Activated naive CD8-positive, alpha-beta T cell treated with anti-CD3 and anti-CD28 coated beads, Interleukin-2, amount 10 ng/mL, durations not matched to agents 7 days and 5 days (primary cell): ENCODE measurements at regions of chr18 and their contacts with region 1.

Region 1: DNA sequence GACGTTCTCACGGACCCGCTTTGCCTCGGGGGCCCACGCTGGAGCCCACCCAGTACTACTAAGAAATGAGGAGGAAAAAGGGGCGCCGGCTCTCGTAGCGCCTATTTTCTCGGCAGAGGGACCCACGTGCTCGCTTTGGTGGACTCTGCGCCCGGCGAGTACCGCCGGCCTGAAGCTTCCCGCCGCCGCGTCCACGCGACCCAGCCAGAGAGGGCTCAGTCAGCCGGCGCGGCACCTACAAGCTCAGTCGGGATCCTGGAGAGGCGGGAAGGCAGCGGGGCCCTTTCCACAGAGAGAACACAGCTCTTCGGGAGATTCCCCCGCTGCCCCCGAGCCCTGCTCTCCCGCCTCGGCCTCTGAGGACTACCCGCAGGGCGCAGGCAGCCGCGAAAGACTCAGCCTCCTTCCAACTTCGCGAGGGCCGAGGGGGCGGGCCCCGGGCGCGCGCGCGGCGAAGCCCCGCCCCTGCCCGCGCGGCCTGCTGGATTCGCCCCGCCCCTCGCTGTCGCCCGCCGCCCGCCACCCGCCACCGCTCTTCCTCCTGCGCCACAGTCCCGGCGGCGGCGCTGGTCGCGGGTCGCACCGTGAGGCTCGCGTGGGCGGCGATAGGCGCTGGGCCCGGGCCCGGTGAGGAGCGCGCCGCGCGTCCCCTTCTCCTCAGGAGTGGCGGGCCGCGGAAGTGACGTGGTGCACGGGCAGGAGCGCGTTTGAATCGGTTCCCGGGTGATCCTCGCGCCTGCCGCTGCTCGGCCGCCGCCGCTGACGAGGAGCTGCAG is at the start of gene SMCHD1:
- DNase-seq: peak; percentile 95
- ATAC-seq: peak; percentile 74
- H3K4me3 Mint-ChIP-seq: peak within 1 kb of the TSS; percentile 94
- H3K27ac Mint-ChIP-seq: peak within 1 kb of the TSS; percentile 94
- H3K4me1 Mint-ChIP-seq: peaks cover 19% of the 10 kb centered on the region
- H3K27me3 Mint-ChIP-seq: no peaks in the 10 kb centered on the region
- total RNA-seq, gene SMCHD1: 171 to 177 TPM

Region 2: DNA sequence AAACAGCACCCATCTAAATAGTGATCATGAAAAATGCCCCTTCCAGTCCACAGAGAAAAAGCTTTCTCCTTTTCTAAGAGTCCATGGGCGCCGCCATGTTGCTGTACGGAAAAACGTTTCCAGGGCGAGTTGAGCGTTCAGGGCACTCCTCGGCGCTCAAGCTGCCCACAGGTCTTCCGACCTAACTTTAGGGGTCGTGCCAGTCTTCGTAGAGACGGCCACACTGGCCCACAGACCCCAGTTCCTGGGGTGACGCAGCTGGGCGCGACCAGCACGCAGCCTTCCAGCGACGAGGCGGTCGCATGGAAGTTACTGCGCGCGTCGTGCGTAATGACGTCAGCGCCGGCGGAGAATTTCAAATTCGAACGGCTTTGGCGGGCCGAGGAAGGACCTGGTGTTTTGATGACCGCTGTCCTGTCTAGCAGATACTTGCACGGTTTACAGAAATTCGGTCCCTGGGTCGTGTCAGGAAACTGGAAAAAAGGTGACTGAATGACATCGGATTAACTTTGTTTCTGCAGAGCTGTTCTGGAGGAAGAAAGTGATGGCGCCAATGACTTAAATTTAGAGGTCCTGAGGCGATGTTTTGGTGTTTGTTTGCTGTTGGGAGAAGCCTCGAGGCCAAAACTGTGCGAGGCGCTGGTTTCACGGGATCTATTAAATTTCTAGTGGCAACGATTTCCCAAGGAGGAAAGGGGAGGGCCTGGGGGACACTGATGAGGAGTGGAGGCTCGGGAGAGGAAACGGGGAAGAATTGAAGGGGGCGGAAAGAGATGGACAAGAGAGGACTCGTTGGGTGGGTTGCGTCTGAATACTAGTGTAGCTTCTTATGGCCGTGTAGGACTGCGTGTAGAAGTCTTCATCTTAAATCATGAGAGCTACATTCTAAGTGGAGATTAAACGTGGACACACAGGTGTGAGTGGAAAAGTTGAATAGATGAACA is 83.9 kb before region 1 on chr18 and contains the starts of genes METTL4 and NDC80:
- POLR2A ChIA-PET with region 1: interaction called, 80 read pairs
- DNase-seq: peak; percentile 90
- ATAC-seq: peak; percentile 79
- H3K4me3 Mint-ChIP-seq: peak within 1 kb of the TSS; percentile 100
- H3K27ac Mint-ChIP-seq: peak within 1 kb of the TSS; percentile 98
- H3K4me1 Mint-ChIP-seq: peaks cover 39% of the 10 kb centered on the region
- H3K27me3 Mint-ChIP-seq: no peaks in the 10 kb centered on the region
- total RNA-seq, gene METTL4: 22.7 to 25.8 TPM
- total RNA-seq, gene NDC80: 66.0 to 67.0 TPM

Region 3: DNA sequence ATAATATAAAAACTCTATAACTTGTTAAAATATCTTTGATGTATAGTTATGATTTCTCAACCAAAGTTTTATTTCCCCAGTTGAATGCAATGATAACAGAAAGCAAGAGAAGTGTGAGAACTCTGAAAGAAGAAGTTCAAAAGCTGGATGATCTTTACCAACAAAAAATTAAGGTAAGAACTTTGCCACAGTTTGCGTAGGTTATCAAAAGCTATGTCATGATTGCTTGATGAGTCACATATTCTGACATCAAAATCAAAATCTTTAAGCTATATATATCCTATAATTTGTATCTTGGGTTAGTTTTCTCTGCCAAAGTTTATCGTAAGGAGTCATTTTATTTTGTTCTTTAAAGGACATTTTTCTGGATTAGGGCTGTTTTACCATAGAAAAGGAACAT is 49.0 kb before region 1 on chr18:
- POLR2A ChIA-PET with region 1: interaction called, 48 read pairs
- DNase-seq: no peak
- ATAC-seq: no peak
- H3K4me3 Mint-ChIP-seq: peak overlapping the region; percentile 66
- H3K27ac Mint-ChIP-seq: peak overlapping the region; percentile 83
- H3K4me1 Mint-ChIP-seq: peaks cover 28% of the 10 kb centered on the region
- H3K27me3 Mint-ChIP-seq: no peaks in the 10 kb centered on the region

Region 4: GRCh38 chr18:2636126-2636631 is 19.2 kb before region 1 on chr18:
- POLR2A ChIA-PET with region 1: interaction called, 159 read pairs
- DNase-seq: no peak
- ATAC-seq: peak; percentile 35
- H3K4me3 Mint-ChIP-seq: peak overlapping the region; percentile 79
- H3K27ac Mint-ChIP-seq: peak overlapping the region; percentile 94
- H3K4me1 Mint-ChIP-seq: peaks cover 51% of the 10 kb centered on the region
- H3K27me3 Mint-ChIP-seq: no peaks in the 10 kb centered on the region

Region 5: GRCh38 chr18:2680216-2680792 is 24.9 kb after region 1 on chr18:
- POLR2A ChIA-PET with region 1: interaction called, 42 read pairs
- DNase-seq: no peak
- ATAC-seq: no peak
- H3K4me3 Mint-ChIP-seq: peak overlapping the region; percentile 16
- H3K27ac Mint-ChIP-seq: peak overlapping the region; percentile 80
- H3K4me1 Mint-ChIP-seq: peaks cover 47% of the 10 kb centered on the region
- H3K27me3 Mint-ChIP-seq: no peaks in the 10 kb centered on the region